ENCODE measurements at regions of chr15 and their contacts with region 1.

Region 1: GRCh38 chr15:40344631-40345120 is 3.9 kb upstream of the CCDC9B start:
- DNase-seq: peak; percentile 36
- H3K4me3 ChIP-seq: no peak overlapping the region
- H3K27ac ChIP-seq: peak overlapping the region; percentile 96
- H3K4me1 ChIP-seq: peaks cover 41% of the 10 kb centered on the region
- H3K27me3 ChIP-seq: no peaks in the 10 kb centered on the region
- CTCF ChIP-seq: peak; percentile 74 to 88
- POLR2A ChIP-seq: no peak

Region 2: GRCh38 chr15:40323239-40323952 is 21.3 kb before region 1 on chr15 and contains the start of gene INAFM2:
- CTCF ChIA-PET with region 1: interaction called, 287 read pairs
- POLR2A ChIA-PET with region 1: interaction called, 12 read pairs
- dilution Hi-C with region 1: no loop called
- intact Hi-C with region 1: loop called (anchors 1 kb)
- DNase-seq: peak; percentile 98
- H3K4me3 ChIP-seq: peak within 1 kb of the TSS; percentile 41 to 67 (median 57)
- H3K27ac ChIP-seq: peak within 1 kb of the TSS; percentile 8
- H3K4me1 ChIP-seq: peaks cover 50% of the 10 kb centered on the region
- H3K27me3 ChIP-seq: no peaks in the 10 kb centered on the region
- CTCF ChIP-seq: peak; percentile 74 to 83
- POLR2A ChIP-seq: peak; percentile 67
- total RNA-seq, gene INAFM2: 23.6 and 24.1 TPM in 2 replicates

Region 3: GRCh38 chr15:40367686-40368611 is 23.3 kb after region 1 on chr15:
- CTCF ChIA-PET with region 1: interaction called, 60 read pairs
- POLR2A ChIA-PET with region 1: no interaction called
- dilution Hi-C with region 1: no loop called
- intact Hi-C with region 1: loop called (anchors 1 kb)
- DNase-seq: peak; percentile 85
- H3K4me3 ChIP-seq: peak overlapping the region in 2 of 3 experiments; percentile 15 to 22
- H3K27ac ChIP-seq: no peak overlapping the region
- H3K4me1 ChIP-seq: peaks cover 10% of the 10 kb centered on the region
- H3K27me3 ChIP-seq: no peaks in the 10 kb centered on the region
- CTCF ChIP-seq: peak; percentile 86 to 98
- POLR2A ChIP-seq: no peak

Region 4: DNA sequence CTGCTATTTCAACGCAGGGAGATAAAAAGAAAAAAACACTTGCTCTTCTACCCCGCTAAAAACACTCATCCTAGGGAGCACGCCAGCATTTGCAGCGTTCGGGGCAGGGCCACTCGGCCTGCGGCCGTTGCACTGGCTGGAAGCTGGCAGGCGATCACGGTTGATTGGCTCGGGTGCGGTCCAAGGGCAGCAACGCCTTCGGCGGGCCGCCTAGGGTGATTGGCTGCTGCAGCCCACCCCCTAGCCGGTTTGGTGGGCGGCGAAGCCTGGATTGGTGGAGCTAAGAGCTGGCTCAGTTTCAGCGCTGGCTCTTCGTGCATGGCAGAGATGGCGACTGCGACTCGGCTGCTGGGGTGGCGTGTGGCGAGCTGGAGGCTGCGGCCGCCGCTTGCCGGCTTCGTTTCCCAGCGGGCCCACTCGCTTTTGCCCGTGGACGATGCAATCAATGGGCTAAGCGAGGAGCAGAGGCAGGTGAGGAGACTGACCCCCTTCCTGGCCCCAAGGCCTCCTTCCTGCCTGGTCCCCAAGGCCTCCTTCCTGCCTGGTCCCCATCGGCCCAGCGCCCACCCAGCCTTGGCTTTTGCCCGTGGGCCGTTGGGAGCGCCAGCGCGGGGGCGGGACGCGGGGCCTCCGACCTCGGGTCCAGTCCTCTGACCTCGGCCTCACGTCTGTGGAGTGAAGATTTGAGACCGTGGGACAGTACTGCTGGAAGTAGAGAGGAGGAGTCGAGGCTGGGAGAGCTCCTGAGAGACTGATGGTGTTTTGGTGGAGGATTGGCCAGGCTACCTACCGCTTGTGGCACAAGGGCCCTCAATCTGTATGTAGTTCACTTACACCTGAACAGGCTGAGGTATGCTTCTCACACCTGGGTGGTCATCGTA is 61.1 kb after region 1 on chr15 and contains the start of gene IVD:
- CTCF ChIA-PET with region 1: interaction called, 17 read pairs
- POLR2A ChIA-PET with region 1: no interaction called
- dilution Hi-C with region 1: no loop called
- intact Hi-C with region 1: no loop called
- DNase-seq: peak; percentile 97
- H3K4me3 ChIP-seq: peak within 1 kb of the TSS; percentile 47 to 87 (median 74)
- H3K27ac ChIP-seq: peak within 1 kb of the TSS; percentile 9
- H3K4me1 ChIP-seq: peaks cover 11% of the 10 kb centered on the region
- H3K27me3 ChIP-seq: no peaks in the 10 kb centered on the region
- CTCF ChIP-seq: no peak
- POLR2A ChIP-seq: peak; percentile 80
- total RNA-seq, gene IVD: 62.5 and 64.3 TPM in 2 replicates

Region 5: DNA sequence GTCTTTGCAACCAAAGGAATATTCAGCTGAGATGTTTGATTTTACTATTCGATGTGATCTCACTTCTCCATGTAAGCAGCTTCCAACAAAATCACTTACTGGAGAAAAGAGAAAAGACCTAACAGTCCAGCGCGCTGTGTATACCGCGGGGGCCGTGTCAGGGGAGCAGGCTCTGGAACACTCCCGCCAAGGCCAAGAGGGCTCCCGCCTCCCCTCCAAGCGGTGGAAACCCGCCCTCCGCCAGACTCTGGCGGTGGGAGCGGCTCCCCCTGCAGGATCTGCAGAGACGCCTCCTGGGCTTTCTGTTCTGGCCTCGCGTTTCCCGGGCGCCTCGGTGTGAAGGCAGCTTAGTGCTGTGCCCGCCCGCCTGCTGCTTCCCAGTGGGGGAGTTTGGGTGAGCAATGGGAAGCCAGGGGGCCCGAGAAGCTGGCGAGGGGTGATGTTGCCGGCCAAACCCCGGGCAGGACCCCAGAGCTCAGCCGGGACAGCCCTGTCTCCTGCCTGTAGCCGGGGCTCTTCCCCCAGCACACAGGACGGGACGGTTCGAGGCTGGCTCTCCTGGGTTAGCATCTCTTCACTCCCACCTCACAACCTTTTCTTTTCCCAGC is 162.4 kb after region 1 on chr15:
- CTCF ChIA-PET with region 1: interaction called, 4 read pairs
- POLR2A ChIA-PET with region 1: no interaction called
- dilution Hi-C with region 1: no loop called
- intact Hi-C with region 1: loop called (anchors 1 kb)
- DNase-seq: peak; percentile 76
- H3K4me3 ChIP-seq: peak overlapping the region in 2 of 3 experiments; percentile 11 to 51
- H3K27ac ChIP-seq: no peak overlapping the region
- H3K4me1 ChIP-seq: no peaks in the 10 kb centered on the region
- H3K27me3 ChIP-seq: peaks cover 0 to 3% of the 10 kb centered on the region in 2 experiments
- CTCF ChIP-seq: peak; percentile 64 to 83
- POLR2A ChIP-seq: no peak

Measured in endothelial cell of umbilical vein (primary cell).